ENCODE measurements at regions of chr12 and their contacts with region 1.

Region 1: GRCh38 chr12:122123051-122123760 is 44.6 kb downstream of the MLXIP start:
- DNase-seq: peak; percentile 64 to 80 (median 77)
- H3K4me3 ChIP-seq: peak overlapping the region in 1 of 7 experiments; percentile 54
- H3K27ac ChIP-seq: peak overlapping the region in 1 of 2 experiments; percentile 31
- H3K4me1 ChIP-seq: peaks cover 0 to 22% (median 15%) of the 10 kb centered on the region in 4 experiments
- H3K27me3 ChIP-seq: no peaks in the 10 kb centered on the region

Region 2: DNA sequence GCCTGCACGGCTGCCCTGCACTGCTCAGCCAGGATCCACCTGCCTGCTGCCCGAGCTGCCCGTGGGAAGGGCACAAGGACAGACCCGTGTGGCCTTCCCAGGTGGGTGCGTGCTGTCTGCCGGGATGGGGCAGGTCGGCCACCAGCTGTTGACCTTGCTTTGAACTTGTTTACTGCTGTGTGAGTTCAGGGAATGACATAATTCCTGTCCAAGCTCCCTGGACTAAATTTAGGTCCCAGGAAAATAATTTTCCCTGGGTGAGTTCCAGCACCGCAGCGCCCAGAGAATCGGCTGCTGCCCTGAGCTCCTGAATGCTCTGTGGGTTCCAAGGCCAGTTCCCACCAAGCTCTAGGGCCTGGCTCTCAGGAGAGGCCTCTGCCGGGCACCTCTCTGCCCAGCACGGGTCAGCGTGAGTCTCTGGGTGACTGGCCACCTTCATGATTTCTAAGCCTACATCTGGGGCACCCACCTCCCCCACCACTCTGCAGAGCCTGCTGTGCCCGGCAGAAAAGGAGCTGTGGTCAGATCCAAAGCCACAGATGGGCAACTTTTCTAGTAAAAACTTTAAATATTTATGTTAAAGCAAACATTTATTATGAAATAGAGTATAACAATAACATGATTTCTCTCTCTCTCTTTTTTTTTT is 71.9 kb before region 1 on chr12:
- CTCF ChIA-PET with region 1: interaction called, 120 read pairs
- POLR2A ChIA-PET with region 1: interaction called, 4 read pairs
- DNase-seq: no peak
- H3K4me3 ChIP-seq: no peak overlapping the region
- H3K27ac ChIP-seq: no peak overlapping the region
- H3K4me1 ChIP-seq: no peaks in the 10 kb centered on the region
- H3K27me3 ChIP-seq: no peaks in the 10 kb centered on the region

Region 3: DNA sequence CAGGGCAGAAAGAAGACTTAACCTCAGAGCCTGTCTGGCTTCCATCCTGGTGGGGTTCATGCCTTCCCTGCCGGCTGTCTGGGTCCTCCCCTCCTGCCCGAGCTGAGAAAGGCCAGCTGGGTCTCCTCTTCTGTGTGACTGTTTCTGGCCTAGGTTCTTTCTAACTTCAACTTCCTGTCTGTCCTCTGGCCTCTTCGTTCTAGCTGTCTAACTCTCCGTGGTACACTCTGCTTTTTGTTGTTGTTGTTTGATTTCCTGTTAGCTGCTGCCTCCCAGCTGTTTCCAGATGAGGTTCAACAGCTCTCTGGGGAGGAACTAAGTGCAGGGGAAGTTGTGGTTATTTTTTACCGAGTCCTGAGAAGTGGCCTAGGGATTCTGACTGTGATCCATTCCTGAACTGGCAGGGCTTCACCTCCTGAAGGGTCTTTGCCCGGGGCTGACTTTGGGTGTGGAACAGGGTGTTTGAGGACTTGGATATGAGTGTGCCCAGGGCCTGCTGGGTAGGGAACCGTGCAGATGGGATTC is 41.4 kb before region 1 on chr12:
- CTCF ChIA-PET with region 1: interaction called, 25 read pairs
- POLR2A ChIA-PET with region 1: no interaction called
- DNase-seq: peak; percentile 75 to 94 (median 90)
- H3K4me3 ChIP-seq: peak overlapping the region in 6 of 7 experiments; percentile 93 to 99 (median 96)
- H3K27ac ChIP-seq: peak overlapping the region; percentile 46 to 88
- H3K4me1 ChIP-seq: peaks cover 26 to 82% (median 62%) of the 10 kb centered on the region in 4 experiments
- H3K27me3 ChIP-seq: no peaks in the 10 kb centered on the region

Region 4: DNA sequence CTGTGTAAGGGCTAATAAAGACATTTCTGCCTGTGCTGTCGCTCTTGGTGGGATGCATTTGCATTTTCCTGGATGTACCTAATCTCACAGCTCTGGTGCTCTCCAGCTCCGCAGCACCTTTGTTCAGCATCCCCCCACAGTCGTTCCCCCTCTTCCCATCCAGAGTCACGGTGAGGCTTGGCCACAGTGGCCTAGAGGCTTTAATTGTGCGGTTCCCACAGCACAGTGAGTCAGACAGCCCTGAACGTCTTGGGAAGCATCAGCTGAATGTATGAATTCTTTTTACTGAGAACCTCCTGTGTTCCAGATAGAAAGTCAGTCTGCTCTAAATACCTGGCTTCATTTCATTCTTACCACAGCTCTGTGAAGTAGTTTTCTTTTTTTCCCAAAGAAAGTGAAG is 15.9 kb before region 1 on chr12:
- CTCF ChIA-PET with region 1: interaction called, 26 read pairs
- POLR2A ChIA-PET with region 1: no interaction called
- DNase-seq: no peak
- H3K4me3 ChIP-seq: no peak overlapping the region
- H3K27ac ChIP-seq: no peak overlapping the region
- H3K4me1 ChIP-seq: peaks cover 3 to 52% (median 28%) of the 10 kb centered on the region in 4 experiments
- H3K27me3 ChIP-seq: no peaks in the 10 kb centered on the region

Region 5: GRCh38 chr12:122139266-122139665 is 16.1 kb after region 1 on chr12:
- CTCF ChIA-PET with region 1: no interaction called
- POLR2A ChIA-PET with region 1: no interaction called
- DNase-seq: no peak
- H3K4me3 ChIP-seq: no peak overlapping the region
- H3K27ac ChIP-seq: no peak overlapping the region
- H3K4me1 ChIP-seq: no peaks in the 10 kb centered on the region
- H3K27me3 ChIP-seq: no peaks in the 10 kb centered on the region